ENCODE measurements at regions of chr19 and their contacts with region 1.

Region 1: GRCh38 chr19:14472202-14472938 is 2.8 kb downstream of the PTGER1 start:
- DNase-seq: peak; percentile 76 to 88 (median 83)
- H3K4me3 ChIP-seq: peak overlapping the region; percentile 47
- H3K4me3 Mint-ChIP-seq: peak overlapping the region in 6 of 7 donors; percentile 50 to 85 (median 65)
- H3K27ac ChIP-seq: no peak overlapping the region
- H3K27ac Mint-ChIP-seq: no peak overlapping the region
- H3K4me1 ChIP-seq: peaks cover 33% of the 10 kb centered on the region
- H3K4me1 Mint-ChIP-seq: peaks cover 20 to 44% (median 30%) of the 10 kb centered on the region in 3 donors
- H3K27me3 ChIP-seq: peaks cover 23% of the 10 kb centered on the region
- H3K27me3 Mint-ChIP-seq: peaks cover 19 to 25% of the 10 kb centered on the region in 2 donors

Region 2: DNA sequence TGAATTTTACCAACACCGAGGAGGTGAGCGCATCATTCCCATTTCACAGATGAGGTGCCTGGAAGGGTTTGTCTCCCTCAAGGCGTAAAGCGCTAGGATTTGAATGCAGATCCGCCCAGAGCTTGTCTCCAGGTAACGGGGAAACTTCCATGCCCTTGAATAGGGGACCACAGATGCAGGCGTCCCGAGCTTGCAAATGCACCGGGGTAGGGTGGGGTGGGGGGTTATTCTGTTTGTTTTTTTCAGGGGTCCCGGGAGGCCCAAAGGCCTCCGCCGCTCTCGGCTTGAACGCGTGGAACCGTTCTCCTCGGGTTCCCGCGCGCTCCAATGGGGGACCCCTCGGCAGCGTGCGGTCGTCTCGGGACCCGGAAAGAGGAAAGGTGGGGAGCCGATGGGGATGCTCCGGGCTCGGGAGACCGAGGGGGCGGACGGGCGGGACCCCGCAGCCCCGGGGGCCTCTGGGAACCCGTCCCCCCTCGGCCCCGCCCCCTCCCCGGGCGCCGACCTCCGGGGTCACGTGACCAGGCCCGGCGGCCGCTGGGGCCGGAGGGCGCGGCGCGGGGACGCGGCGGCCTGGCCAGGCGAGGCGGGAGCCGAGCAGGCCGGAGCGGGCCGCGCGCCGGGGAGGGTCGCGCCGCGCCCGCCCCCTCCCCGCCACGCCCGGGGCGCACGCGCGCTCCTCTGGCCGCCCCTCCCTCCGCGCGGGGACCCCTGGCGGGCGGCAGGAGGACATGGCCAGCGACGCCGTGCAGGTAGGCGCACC is 39.4 kb before region 1 on chr19 and contains the start of gene PKN1:
- CTCF ChIA-PET with region 1: interaction called, 18 read pairs
- POLR2A ChIA-PET with region 1: no interaction called
- DNase-seq: peak in 4 of 5 donors; percentile 32 to 71 (median 52)
- H3K4me3 ChIP-seq: peak within 1 kb of the TSS; percentile 59
- H3K4me3 Mint-ChIP-seq: peak within 1 kb of the TSS; percentile 82 to 95 (median 87)
- H3K27ac ChIP-seq: peak within 1 kb of the TSS; percentile 74
- H3K27ac Mint-ChIP-seq: peak within 1 kb of the TSS; percentile 84 to 97 (median 92)
- H3K4me1 ChIP-seq: peaks cover 35% of the 10 kb centered on the region
- H3K4me1 Mint-ChIP-seq: peaks cover 29 to 47% (median 41%) of the 10 kb centered on the region in 3 donors
- H3K27me3 ChIP-seq: no peaks in the 10 kb centered on the region
- H3K27me3 Mint-ChIP-seq: peaks cover 0 to 1% of the 10 kb centered on the region in 2 donors
- total RNA-seq, gene PKN1: 177 to 205 TPM

Region 3: GRCh38 chr19:14459703-14460102 is 12.7 kb before region 1 on chr19:
- CTCF ChIA-PET with region 1: interaction called, 10 read pairs
- POLR2A ChIA-PET with region 1: no interaction called
- DNase-seq: peak in 4 of 5 donors; percentile 28 to 80 (median 54)
- H3K4me3 ChIP-seq: no peak overlapping the region
- H3K4me3 Mint-ChIP-seq: peak overlapping the region in 5 of 7 donors; percentile 12 to 80 (median 57)
- H3K27ac ChIP-seq: no peak overlapping the region
- H3K27ac Mint-ChIP-seq: peak overlapping the region; percentile 80 to 95 (median 90)
- H3K4me1 ChIP-seq: peaks cover 14% of the 10 kb centered on the region
- H3K4me1 Mint-ChIP-seq: peaks cover 24 to 30% (median 27%) of the 10 kb centered on the region in 3 donors
- H3K27me3 ChIP-seq: no peaks in the 10 kb centered on the region
- H3K27me3 Mint-ChIP-seq: no peaks in the 10 kb centered on the region

Region 4: GRCh38 chr19:14487370-14488125 is 15.2 kb after region 1 on chr19:
- CTCF ChIA-PET with region 1: interaction called, 17 read pairs
- POLR2A ChIA-PET with region 1: no interaction called
- DNase-seq: no peak
- H3K4me3 ChIP-seq: no peak overlapping the region
- H3K4me3 Mint-ChIP-seq: no peak overlapping the region
- H3K27ac ChIP-seq: no peak overlapping the region
- H3K27ac Mint-ChIP-seq: no peak overlapping the region
- H3K4me1 ChIP-seq: peaks cover 5% of the 10 kb centered on the region
- H3K4me1 Mint-ChIP-seq: peaks cover 7 to 9% (median 7%) of the 10 kb centered on the region in 3 donors
- H3K27me3 ChIP-seq: no peaks in the 10 kb centered on the region
- H3K27me3 Mint-ChIP-seq: no peaks in the 10 kb centered on the region

Region 5: DNA sequence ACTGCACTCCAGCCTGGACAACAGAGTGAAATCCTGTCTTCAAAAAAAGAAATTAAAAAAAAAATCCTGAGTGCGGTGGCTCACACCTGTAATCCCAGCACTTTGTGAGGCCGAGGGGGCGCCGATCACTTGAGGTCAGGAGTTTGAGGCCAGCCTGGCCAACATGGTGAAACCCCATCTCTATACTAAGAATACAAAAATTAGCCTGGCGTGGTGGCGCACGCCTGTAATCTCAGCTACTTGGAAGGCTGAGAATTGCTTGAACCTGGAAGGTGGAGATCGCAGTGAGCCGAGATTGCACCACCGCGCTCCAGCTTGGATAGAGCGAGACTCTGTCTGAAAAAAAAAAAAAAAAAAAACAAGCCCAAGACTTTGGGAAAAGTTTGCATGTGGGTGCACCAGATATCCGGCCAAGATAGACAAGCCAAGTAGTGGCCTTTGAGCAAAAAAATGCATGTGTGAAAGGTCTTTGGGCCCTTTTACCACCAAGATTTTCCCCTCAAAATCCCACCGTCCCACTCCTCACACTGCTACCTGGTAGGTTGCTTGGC is 40.1 kb after region 1 on chr19:
- CTCF ChIA-PET with region 1: no interaction called
- POLR2A ChIA-PET with region 1: no interaction called
- DNase-seq: peak in 1 of 5 donors; percentile 11
- H3K4me3 ChIP-seq: no peak overlapping the region
- H3K4me3 Mint-ChIP-seq: peak overlapping the region in 2 of 7 donors; percentile 25 to 40
- H3K27ac ChIP-seq: no peak overlapping the region
- H3K27ac Mint-ChIP-seq: peak overlapping the region in 2 of 8 donors; percentile 50 to 97
- H3K4me1 ChIP-seq: peaks cover 57% of the 10 kb centered on the region
- H3K4me1 Mint-ChIP-seq: peaks cover 46 to 56% (median 47%) of the 10 kb centered on the region in 3 donors
- H3K27me3 ChIP-seq: no peaks in the 10 kb centered on the region
- H3K27me3 Mint-ChIP-seq: peaks cover 0 to 11% of the 10 kb centered on the region in 2 donors